ENCODE measurements at regions of chr3 and their contacts with region 1.

Region 1: GRCh38 chr3:46629551-46630517 is 17.5 kb downstream of the FAM240A start:
- DNase-seq: peak; percentile 76
- H3K4me3 Mint-ChIP-seq: no peak overlapping the region
- H3K27ac Mint-ChIP-seq: no peak overlapping the region
- H3K4me1 Mint-ChIP-seq: no peaks in the 10 kb centered on the region
- H3K27me3 Mint-ChIP-seq: no peaks in the 10 kb centered on the region
- CTCF ChIP-seq: peak; percentile 96

Region 2: DNA sequence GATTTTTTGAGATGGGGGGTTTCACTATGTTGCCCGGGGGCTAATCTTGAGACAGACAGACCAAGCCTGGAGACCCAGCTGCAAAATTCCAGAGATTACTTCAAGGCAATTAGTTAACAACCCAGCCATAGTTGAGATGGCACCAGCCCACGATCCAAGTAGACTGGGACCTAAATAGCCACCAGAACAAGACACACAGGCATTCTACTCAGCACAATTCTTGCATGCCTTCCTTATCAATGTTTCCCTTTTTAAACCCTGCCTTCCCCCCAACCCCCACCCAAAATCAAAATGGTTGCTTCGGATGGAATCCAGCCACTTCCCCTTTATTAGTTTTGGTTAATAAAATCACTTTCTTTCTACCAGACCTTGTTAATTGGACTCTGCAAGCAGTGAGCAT is 11.1 kb after region 1 on chr3:
- CTCF ChIA-PET with region 1: interaction called, 11 read pairs
- POLR2A ChIA-PET with region 1: interaction called, 3 read pairs
- intact Hi-C with region 1: no loop called
- DNase-seq: no peak
- H3K4me3 Mint-ChIP-seq: no peak overlapping the region
- H3K27ac Mint-ChIP-seq: no peak overlapping the region
- H3K4me1 Mint-ChIP-seq: no peaks in the 10 kb centered on the region
- H3K27me3 Mint-ChIP-seq: no peaks in the 10 kb centered on the region
- CTCF ChIP-seq: no peak

Measured in MCF 10A (cell line).